Common myeloid progenitor, CD34-positive (primary cell): ENCODE measurements at regions of chr5 and their contacts with region 1.

Region 1: DNA sequence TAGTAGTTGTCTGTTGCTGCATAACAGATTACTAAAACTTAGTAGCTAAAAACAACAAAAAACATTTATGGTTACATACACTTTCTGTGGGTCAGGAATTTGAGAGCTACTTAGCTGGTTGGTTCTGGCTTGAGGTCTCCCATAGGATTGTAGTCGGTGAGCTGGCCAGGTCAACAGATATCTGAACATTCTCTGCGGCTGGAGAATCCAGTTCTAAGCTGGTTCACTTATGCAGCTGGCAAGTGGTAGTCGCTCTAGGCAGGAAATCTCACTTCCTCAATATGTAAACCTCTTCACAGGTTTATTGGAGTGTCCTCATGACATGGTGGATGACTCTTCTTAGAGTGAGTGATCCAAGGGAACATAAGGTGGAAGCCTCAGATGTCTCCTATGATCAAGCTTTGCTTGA is 65.7 kb upstream of the TNFAIP8 start:
- DNase-seq: peak; percentile 36 to 89 (median 83)
- H3K4me3 ChIP-seq: peak overlapping the region in 1 of 7 experiments; percentile 39
- H3K27ac ChIP-seq: no peak overlapping the region
- H3K4me1 ChIP-seq: peaks cover 43 to 59% (median 51%) of the 10 kb centered on the region in 4 experiments
- H3K27me3 ChIP-seq: no peaks in the 10 kb centered on the region

Region 2: DNA sequence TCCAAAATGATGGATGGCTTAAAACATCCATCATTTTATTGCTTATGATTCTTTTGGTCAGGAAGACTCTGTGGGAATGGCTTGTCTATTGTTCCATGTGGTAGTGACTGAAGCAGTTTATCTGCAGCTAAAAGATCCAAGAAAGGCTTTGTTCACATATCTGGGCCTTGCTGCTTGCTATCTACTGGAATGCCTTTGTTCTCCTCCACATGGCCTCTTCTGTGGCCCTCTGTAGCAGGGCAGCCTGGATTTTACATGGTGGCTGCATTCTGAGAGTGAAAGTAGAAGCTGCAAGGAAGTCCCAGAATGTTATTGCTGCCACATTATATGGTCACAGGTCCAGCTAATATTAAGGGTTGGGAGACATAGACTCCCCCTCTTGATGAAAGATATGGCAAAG is 184.2 kb before region 1 on chr5:
- CTCF ChIA-PET with region 1: no interaction called
- POLR2A ChIA-PET with region 1: no interaction called
- DNase-seq: no peak
- H3K4me3 ChIP-seq: no peak overlapping the region
- H3K27ac ChIP-seq: no peak overlapping the region
- H3K4me1 ChIP-seq: no peaks in the 10 kb centered on the region
- H3K27me3 ChIP-seq: no peaks in the 10 kb centered on the region

Region 3: DNA sequence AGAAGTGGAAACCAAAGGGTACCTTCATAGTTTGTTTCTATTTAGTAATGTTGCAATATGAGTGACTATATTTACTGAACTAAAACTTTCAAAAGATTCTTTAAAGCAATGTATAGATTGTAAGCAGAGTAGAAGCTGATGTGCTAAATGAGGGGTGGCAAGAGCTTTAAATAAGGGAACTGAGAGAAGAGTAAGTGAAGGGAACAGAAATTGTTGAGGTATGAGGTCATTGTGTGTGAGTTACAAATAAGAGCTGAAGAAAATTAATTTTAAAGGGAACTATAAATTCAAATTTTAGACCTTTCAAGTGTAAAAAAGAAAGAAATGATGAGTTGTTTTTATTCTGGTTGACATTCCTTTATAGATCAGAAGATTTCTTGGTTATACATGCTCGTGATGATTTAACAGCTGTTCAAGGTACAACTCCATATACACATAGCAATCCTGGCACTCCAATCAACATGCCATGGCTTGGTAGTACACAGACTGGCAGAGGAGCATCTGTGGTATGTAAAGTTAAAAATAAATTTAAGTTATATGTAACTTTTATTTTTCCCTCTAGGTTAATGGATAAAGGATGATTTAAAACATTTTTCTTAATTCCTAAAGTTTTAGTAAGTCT is 69.5 kb before region 1 on chr5:
- CTCF ChIA-PET with region 1: no interaction called
- POLR2A ChIA-PET with region 1: no interaction called
- DNase-seq: no peak
- H3K4me3 ChIP-seq: no peak overlapping the region
- H3K27ac ChIP-seq: no peak overlapping the region
- H3K4me1 ChIP-seq: no peaks in the 10 kb centered on the region
- H3K27me3 ChIP-seq: no peaks in the 10 kb centered on the region

Region 4: DNA sequence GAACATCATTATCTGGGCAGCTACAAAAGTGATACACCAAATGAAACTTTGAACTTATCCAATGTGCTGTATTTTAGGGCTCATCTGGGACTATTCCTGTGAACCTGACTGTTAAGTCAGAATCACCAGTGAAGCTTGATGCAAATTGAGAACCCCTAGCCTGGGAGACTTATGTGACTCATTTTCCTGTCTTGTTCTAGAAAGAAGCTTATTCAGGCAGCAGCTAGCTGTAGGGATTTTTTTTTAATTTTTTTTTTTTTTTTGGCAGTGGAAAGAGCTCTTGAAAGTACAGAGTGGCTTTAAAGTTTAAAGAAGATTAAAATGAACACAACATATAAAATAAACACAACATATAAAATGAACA is 15.4 kb before region 1 on chr5:
- CTCF ChIA-PET with region 1: interaction called, 15 read pairs
- POLR2A ChIA-PET with region 1: no interaction called
- DNase-seq: peak; percentile 52 to 84 (median 73)
- H3K4me3 ChIP-seq: peak overlapping the region in 1 of 7 experiments; percentile 20
- H3K27ac ChIP-seq: peak overlapping the region; percentile 30 to 70
- H3K4me1 ChIP-seq: peaks cover 61 to 80% (median 70%) of the 10 kb centered on the region in 4 experiments
- H3K27me3 ChIP-seq: no peaks in the 10 kb centered on the region

Region 5: DNA sequence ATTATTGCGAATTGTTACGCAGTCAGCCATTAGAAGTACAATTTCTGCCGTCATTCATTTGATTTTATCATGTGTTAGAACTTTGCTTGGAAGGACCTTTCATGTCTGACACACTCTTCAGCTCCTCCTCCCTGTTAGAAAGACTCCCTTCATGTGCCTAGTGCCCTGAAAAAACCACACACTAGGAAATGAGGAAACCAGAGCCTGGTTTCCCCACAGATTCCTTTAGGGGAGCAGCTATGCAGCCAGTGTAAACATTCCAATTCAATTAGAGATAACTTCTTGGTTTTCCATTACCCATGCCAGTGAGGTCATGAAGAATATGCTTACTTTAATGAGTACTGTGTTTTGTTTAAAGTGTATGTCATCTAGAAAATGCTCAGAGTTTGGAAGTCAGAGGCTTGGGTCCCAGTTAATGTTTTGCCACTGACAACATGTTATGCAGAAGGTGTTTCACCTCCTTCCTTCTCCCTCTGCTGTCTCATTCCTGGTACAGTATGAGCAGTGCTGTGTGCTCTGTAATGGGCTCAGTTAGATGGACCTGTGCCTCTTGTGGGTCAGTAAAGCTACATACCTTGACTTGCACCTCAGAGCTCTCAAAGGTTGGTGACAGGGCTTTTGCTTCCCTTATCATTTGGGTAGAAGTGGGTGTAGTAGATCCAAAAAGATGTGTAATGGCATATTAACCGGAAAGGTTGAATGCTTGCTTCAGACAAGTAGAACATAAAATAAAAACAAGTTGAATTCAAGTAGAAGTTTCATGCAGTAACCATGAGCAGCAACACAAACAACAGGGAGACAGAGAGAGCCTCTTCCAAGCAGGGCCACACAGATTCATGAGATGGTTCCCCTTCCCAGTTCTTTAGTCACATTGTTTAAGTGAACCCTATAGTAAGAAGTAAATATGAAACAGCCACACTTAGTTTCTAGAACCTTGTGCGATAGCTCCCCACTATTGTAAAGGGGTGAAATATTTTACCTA is 13.0 kb after region 1 on chr5:
- CTCF ChIA-PET with region 1: interaction called, 30 read pairs
- POLR2A ChIA-PET with region 1: no interaction called
- DNase-seq: no peak
- H3K4me3 ChIP-seq: no peak overlapping the region
- H3K27ac ChIP-seq: peak overlapping the region in 1 of 2 experiments; percentile 51
- H3K4me1 ChIP-seq: peaks cover 40 to 52% (median 45%) of the 10 kb centered on the region in 4 experiments
- H3K27me3 ChIP-seq: no peaks in the 10 kb centered on the region

Region 6: GRCh38 chr5:119347991-119348390 is 57.8 kb after region 1 on chr5:
- CTCF ChIA-PET with region 1: no interaction called
- POLR2A ChIA-PET with region 1: no interaction called
- DNase-seq: no peak
- H3K4me3 ChIP-seq: no peak overlapping the region
- H3K27ac ChIP-seq: no peak overlapping the region
- H3K4me1 ChIP-seq: peaks cover 3 to 22% (median 9%) of the 10 kb centered on the region in 4 experiments
- H3K27me3 ChIP-seq: no peaks in the 10 kb centered on the region

Region 7: GRCh38 chr5:119389288-119390030 is 99.3 kb after region 1 on chr5:
- CTCF ChIA-PET with region 1: no interaction called
- POLR2A ChIA-PET with region 1: no interaction called
- DNase-seq: peak in 1 of 3 donors; percentile 9
- H3K4me3 ChIP-seq: peak overlapping the region in 1 of 7 experiments; percentile 5
- H3K27ac ChIP-seq: peak overlapping the region in 1 of 2 experiments; percentile 10
- H3K4me1 ChIP-seq: peaks cover 5 to 13% (median 9%) of the 10 kb centered on the region in 4 experiments
- H3K27me3 ChIP-seq: no peaks in the 10 kb centered on the region